ENCODE measurements at regions of chr1 and their contacts with region 1.

Region 1: DNA sequence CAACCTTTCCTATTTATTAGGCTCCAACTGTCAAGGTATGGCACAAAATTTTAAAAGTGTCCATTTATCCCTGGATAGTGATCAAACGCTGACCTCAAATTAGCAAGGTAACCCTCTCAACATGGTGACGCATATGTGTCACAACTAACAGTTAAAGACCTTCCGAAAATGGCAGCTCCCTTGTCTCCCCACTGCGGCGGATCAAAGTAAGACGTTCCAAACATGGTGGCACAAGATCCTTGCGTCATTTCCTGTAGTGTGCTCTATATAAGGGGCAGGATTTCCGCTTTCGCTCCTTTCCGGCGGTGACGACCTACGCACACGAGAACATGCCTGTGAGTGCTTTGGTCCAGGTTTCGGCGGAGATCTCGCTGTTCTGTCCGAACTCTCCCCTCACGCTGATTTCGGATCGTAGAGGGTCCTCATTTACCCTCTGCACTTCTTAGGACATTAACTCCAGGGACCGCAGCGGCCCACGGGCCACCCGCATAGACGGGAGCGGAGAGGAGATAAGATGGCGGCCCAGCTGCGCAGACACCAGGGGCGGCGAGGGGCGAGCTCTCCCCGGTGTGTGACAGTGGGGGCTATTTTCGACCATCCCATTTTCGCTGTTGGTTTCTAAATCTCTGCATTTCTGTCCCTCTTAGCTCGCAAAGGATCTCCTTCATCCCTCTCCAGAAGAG is at the start of gene RPS27:
- DNase-seq: peak; percentile 72 to 98 (median 85)
- ATAC-seq: peak; percentile 85
- H3K4me3 ChIP-seq: peak within 1 kb of the TSS; percentile 95 to 97
- H3K4me3 Mint-ChIP-seq: peak within 1 kb of the TSS; percentile 98
- H3K27ac ChIP-seq: peak within 1 kb of the TSS; percentile 98 to 99
- H3K27ac Mint-ChIP-seq: peak within 1 kb of the TSS; percentile 99
- H3K4me1 ChIP-seq: peaks cover 43% of the 10 kb centered on the region
- H3K4me1 Mint-ChIP-seq: peaks cover 44% of the 10 kb centered on the region
- H3K27me3 ChIP-seq: no peaks in the 10 kb centered on the region
- H3K27me3 Mint-ChIP-seq: no peaks in the 10 kb centered on the region
- CTCF ChIP-seq: no peak
- total RNA-seq, gene RPS27: 6,306 to 6,659 TPM

Region 2: GRCh38 chr1:153494976-153495535 is 495.6 kb before region 1 on chr1:
- CTCF ChIA-PET with region 1: no interaction called
- POLR2A ChIA-PET with region 1: no interaction called
- intact Hi-C with region 1: no loop called
- DNase-seq: peak; percentile 46 to 81 (median 72)
- ATAC-seq: peak; percentile 68
- H3K4me3 ChIP-seq: no peak overlapping the region
- H3K4me3 Mint-ChIP-seq: no peak overlapping the region
- H3K27ac ChIP-seq: no peak overlapping the region
- H3K27ac Mint-ChIP-seq: no peak overlapping the region
- H3K4me1 ChIP-seq: no peaks in the 10 kb centered on the region
- H3K4me1 Mint-ChIP-seq: no peaks in the 10 kb centered on the region
- H3K27me3 ChIP-seq: peaks cover 4 to 5% of the 10 kb centered on the region in 2 experiments
- H3K27me3 Mint-ChIP-seq: peaks cover 28% of the 10 kb centered on the region
- CTCF ChIP-seq: peak; percentile 91

Region 3: GRCh38 chr1:153633716-153634665 is 356.6 kb before region 1 on chr1 and contains the start of gene CHTOP:
- CTCF ChIA-PET with region 1: no interaction called
- POLR2A ChIA-PET with region 1: interaction called, 12 read pairs
- intact Hi-C with region 1: no loop called
- DNase-seq: peak; percentile 91 to 99 (median 96)
- ATAC-seq: peak; percentile 91
- H3K4me3 ChIP-seq: peak within 1 kb of the TSS; percentile 98 to 100
- H3K4me3 Mint-ChIP-seq: peak within 1 kb of the TSS; percentile 100
- H3K27ac ChIP-seq: peak within 1 kb of the TSS; percentile 99 to 100
- H3K27ac Mint-ChIP-seq: peak within 1 kb of the TSS; percentile 100
- H3K4me1 ChIP-seq: peaks cover 19% of the 10 kb centered on the region
- H3K4me1 Mint-ChIP-seq: peaks cover 36% of the 10 kb centered on the region
- H3K27me3 ChIP-seq: no peaks in the 10 kb centered on the region
- H3K27me3 Mint-ChIP-seq: no peaks in the 10 kb centered on the region
- CTCF ChIP-seq: no peak
- total RNA-seq, gene CHTOP: 79.1 to 81.2 TPM

Region 4: DNA sequence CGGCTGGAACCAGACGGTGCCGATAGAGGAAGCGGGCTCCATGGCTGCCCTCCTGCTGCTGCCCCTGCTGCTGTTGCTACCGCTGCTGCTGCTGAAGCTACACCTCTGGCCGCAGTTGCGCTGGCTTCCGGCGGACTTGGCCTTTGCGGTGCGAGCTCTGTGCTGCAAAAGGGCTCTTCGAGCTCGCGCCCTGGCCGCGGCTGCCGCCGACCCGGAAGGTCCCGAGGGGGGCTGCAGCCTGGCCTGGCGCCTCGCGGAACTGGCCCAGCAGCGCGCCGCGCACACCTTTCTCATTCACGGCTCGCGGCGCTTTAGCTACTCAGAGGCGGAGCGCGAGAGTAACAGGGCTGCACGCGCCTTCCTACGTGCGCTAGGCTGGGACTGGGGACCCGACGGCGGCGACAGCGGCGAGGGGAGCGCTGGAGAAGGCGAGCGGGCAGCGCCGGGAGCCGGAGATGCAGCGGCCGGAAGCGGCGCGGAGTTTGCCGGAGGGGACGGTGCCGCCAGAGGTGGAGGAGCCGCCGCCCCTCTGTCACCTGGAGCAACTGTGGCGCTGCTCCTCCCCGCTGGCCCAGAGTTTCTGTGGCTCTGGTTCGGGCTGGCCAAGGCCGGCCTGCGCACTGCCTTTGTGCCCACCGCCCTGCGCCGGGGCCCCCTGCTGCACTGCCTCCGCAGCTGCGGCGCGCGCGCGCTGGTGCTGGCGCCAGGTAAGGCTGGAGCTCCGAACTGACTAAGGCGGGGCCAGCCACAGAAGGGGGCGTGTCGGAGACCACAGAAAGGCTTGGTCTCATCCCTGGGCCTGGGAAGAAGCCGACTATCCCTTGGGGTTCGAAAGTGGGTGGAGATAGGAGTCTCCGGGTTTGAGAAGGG is 214.9 kb before region 1 on chr1:
- CTCF ChIA-PET with region 1: interaction called, 3 read pairs
- POLR2A ChIA-PET with region 1: interaction called, 18 read pairs
- intact Hi-C with region 1: no loop called
- DNase-seq: peak; percentile 23 to 83 (median 68)
- ATAC-seq: peak; percentile 80
- H3K4me3 ChIP-seq: peak overlapping the region; percentile 62 to 67
- H3K4me3 Mint-ChIP-seq: peak overlapping the region; percentile 85
- H3K27ac ChIP-seq: peak overlapping the region; percentile 49 to 66
- H3K27ac Mint-ChIP-seq: peak overlapping the region; percentile 84
- H3K4me1 ChIP-seq: peaks cover 31% of the 10 kb centered on the region
- H3K4me1 Mint-ChIP-seq: peaks cover 34% of the 10 kb centered on the region
- H3K27me3 ChIP-seq: no peaks in the 10 kb centered on the region
- H3K27me3 Mint-ChIP-seq: no peaks in the 10 kb centered on the region
- CTCF ChIP-seq: no peak

Region 5: DNA sequence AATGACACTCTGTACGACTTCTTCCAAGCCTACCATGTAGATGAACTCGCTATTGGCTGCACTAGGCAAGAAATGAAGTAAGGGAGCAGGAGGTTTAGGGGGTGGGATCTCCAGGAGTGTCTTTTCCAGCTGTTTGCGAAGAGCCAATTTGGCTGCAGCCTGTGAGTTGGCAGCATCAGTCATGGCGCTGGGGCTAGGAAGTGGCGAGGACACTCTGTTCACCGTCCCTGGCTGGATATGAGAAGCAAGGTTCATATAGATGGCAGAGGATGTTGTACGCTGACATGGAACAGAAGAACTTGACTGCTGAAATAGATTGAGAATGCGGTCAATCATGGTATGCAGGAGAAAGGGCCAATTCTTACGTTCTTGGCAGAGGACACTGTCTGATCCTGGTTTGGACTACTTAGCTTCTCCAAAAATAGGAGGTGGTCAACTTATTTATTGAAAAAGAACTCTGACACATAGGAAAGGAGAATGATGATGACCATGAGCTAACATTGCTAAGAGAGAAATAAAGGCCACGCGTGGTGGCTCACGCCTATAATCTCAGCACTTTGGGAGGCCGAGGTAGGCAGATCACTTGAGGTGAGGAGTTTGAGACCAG is 174.2 kb before region 1 on chr1:
- CTCF ChIA-PET with region 1: interaction called, 10 read pairs
- POLR2A ChIA-PET with region 1: interaction called, 6 read pairs
- intact Hi-C with region 1: loop called (anchors 1 kb)
- DNase-seq: no peak
- ATAC-seq: no peak
- H3K4me3 ChIP-seq: no peak overlapping the region
- H3K4me3 Mint-ChIP-seq: no peak overlapping the region
- H3K27ac ChIP-seq: no peak overlapping the region
- H3K27ac Mint-ChIP-seq: no peak overlapping the region
- H3K4me1 ChIP-seq: no peaks in the 10 kb centered on the region
- H3K4me1 Mint-ChIP-seq: no peaks in the 10 kb centered on the region
- H3K27me3 ChIP-seq: no peaks in the 10 kb centered on the region
- H3K27me3 Mint-ChIP-seq: no peaks in the 10 kb centered on the region
- CTCF ChIP-seq: no peak

Region 6: DNA sequence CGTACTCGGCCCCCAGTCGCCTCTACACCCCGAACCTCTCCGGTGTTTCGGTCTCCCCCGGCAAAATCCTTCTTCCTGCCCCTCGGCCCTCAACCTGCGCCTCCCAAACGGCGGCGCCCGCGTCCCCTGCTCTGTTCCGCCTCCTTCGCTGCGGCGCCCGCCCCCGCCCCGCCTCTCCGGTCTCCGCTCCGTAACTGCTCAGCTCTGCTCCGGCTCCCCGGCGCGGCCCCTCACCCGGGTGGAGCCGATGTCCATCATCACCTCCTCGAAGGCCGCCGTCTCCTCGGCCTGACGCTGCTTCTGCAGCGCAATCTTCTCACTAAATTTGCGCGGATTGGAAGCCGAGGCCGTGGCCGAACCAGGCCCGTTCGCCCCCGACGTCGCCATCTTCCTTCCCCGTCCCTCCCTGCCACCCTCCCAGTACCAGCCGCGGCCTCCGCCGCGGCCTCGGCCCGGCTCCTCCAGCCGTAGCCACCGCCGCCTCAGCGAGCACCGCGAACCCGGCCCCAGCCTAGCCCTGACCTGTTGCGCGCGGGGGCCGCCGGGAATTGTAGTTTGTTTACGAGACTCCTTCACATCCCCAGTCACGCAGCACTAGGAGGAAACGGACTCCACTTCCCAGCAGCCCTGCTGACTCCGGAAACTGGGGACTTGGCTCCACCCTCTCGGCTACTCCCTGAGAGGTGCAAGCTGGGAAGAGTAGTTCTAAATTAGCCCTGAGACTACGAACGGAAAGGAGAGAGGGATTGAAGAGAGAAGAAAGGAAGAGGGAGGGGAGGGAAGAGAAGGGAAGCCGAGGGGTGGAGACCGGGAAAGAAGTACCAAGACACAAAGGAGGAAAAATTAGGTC is 32.3 kb before region 1 on chr1 and contains the start of gene CRTC2:
- CTCF ChIA-PET with region 1: interaction called, 22 read pairs
- POLR2A ChIA-PET with region 1: interaction called, 15 read pairs
- intact Hi-C with region 1: loop called (anchors 1 kb)
- DNase-seq: peak; percentile 92 to 99 (median 97)
- ATAC-seq: peak; percentile 86
- H3K4me3 ChIP-seq: peak within 1 kb of the TSS; percentile 97 to 98
- H3K4me3 Mint-ChIP-seq: peak within 1 kb of the TSS; percentile 99
- H3K27ac ChIP-seq: peak within 1 kb of the TSS; percentile 82 to 93
- H3K27ac Mint-ChIP-seq: peak within 1 kb of the TSS; percentile 98
- H3K4me1 ChIP-seq: peaks cover 53% of the 10 kb centered on the region
- H3K4me1 Mint-ChIP-seq: peaks cover 65% of the 10 kb centered on the region
- H3K27me3 ChIP-seq: no peaks in the 10 kb centered on the region
- H3K27me3 Mint-ChIP-seq: no peaks in the 10 kb centered on the region
- CTCF ChIP-seq: no peak
- total RNA-seq, gene CRTC2: 169 to 201 TPM

Region 7: DNA sequence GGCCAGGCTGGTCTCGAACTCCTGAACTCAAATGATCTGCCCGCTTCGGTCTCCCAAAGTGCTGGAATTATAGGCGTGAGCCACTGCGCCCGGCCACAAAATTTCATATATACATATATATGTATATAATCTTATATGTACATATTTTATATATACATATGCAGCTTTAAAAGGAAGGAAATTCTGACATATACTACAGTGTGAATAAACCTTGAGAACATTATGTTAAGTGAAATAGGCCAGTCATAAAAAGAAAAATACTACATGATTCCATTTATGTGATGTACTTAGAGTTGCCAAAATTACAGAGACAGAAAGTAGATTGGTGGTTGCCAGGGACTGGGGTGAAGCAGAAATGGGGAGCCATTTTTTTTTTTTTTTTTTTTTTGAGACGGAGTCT is 101.1 kb after region 1 on chr1:
- CTCF ChIA-PET with region 1: no interaction called
- POLR2A ChIA-PET with region 1: no interaction called
- intact Hi-C with region 1: no loop called
- DNase-seq: no peak
- ATAC-seq: no peak
- H3K4me3 ChIP-seq: no peak overlapping the region
- H3K4me3 Mint-ChIP-seq: no peak overlapping the region
- H3K27ac ChIP-seq: no peak overlapping the region
- H3K27ac Mint-ChIP-seq: no peak overlapping the region
- H3K4me1 ChIP-seq: no peaks in the 10 kb centered on the region
- H3K4me1 Mint-ChIP-seq: no peaks in the 10 kb centered on the region
- H3K27me3 ChIP-seq: no peaks in the 10 kb centered on the region
- H3K27me3 Mint-ChIP-seq: peaks cover 2% of the 10 kb centered on the region
- CTCF ChIP-seq: no peak

Region 8: GRCh38 chr1:154183045-154183915 is 192.7 kb after region 1 on chr1:
- CTCF ChIA-PET with region 1: no interaction called
- POLR2A ChIA-PET with region 1: interaction called, 21 read pairs
- intact Hi-C with region 1: loop called in 1 of 2 experiments (anchors 2 kb)
- DNase-seq: peak; percentile 86 to 96 (median 94)
- ATAC-seq: peak; percentile 75
- H3K4me3 ChIP-seq: peak overlapping the region; percentile 79 to 91
- H3K4me3 Mint-ChIP-seq: peak overlapping the region; percentile 100
- H3K27ac ChIP-seq: peak overlapping the region; percentile 95 to 97
- H3K27ac Mint-ChIP-seq: peak overlapping the region; percentile 95
- H3K4me1 ChIP-seq: peaks cover 42% of the 10 kb centered on the region
- H3K4me1 Mint-ChIP-seq: peaks cover 48% of the 10 kb centered on the region
- H3K27me3 ChIP-seq: no peaks in the 10 kb centered on the region
- H3K27me3 Mint-ChIP-seq: no peaks in the 10 kb centered on the region
- CTCF ChIP-seq: no peak